Dendritic cell treated with granulocyte-macrophage colony-stimulating factor and Interleukin-4, amounts not matched to agents 40 ng/mL and 50 ng/mL, for 4 days (primary cell): ENCODE measurements at regions of chr1 and their contacts with region 1.

Region 1: DNA sequence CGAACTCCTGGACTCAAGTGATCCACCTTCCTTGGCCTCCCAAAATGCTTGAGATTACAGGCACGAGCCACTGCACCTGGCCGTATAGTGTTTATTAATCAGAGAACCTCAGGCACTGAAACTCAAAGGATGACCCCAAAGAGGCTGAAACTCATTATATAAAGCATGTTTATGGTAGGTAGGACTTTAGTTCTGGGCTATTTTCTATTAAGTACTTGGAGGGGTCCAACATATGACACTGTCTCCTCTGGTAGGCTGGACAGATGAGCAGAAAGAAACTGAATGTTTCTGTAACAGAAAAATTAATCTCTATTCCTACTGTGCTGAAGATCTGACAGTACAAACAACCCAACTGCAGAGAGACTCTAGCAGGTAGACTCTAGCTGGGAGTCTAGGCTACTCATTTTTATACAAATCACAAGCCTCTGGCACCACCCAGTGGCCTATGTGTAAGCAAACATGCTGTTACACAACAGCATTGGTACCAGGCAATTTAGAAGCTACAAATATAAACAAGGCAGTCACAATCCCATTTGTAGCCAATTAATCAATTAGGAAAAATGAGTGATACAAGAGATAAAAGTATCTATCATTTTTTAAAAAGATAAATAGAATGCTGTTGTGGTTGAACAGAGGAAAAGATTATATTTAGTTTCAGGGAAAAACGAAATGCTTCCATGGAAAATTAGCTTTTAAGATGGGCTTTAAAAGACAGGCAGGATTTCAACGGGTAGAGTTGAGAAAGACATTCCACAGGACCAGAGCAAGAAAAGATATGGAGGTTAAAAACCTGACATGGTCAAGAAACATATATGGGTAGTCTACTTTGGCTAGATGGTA is 10.4 kb downstream of the DCAF8 start:
- H3K4me3 Mint-ChIP-seq: no peak overlapping the region
- H3K27ac Mint-ChIP-seq: no peak overlapping the region
- H3K4me1 Mint-ChIP-seq: no peaks in the 10 kb centered on the region
- H3K27me3 Mint-ChIP-seq: no peaks in the 10 kb centered on the region

Region 2: DNA sequence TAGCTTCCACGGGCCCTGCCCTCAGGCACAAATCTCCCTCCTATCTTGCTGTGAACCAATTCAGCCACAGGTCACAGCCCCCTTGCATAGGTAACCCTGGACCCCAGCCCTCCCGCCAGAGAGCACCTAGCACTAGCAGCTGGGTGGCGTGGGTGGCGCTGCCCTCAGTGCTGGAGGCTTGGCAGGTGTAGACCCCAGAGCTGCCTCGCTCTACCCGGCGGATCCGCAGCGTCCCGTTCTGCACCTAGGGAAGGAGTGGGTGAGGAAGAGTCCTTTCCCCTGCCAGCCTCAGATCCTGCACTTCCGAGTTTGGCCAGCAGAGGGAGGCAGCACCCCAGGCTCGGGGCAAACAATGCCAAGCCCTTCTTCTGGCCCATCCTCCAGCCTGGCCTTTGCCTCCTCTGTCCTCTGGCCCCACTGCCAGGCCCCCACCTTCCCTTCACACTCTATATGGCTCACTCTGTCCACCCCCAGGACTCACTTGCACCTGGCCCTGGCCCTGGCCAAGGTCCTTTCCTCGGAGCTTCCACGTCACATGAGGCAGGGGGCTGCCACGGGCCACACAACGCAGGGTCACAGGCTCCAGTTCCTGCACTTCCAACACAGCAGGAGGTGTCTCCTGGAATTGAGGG is 315.5 kb before region 1 on chr1:
- intact Hi-C with region 1: loop called (anchors 5 kb)
- H3K4me3 Mint-ChIP-seq: no peak overlapping the region
- H3K27ac Mint-ChIP-seq: no peak overlapping the region
- H3K4me1 Mint-ChIP-seq: peaks cover 67% of the 10 kb centered on the region
- H3K27me3 Mint-ChIP-seq: peaks cover 14% of the 10 kb centered on the region

Region 3: GRCh38 chr1:160354388-160354985 is 102.6 kb after region 1 on chr1:
- intact Hi-C with region 1: no loop called
- H3K4me3 Mint-ChIP-seq: no peak overlapping the region
- H3K27ac Mint-ChIP-seq: no peak overlapping the region
- H3K4me1 Mint-ChIP-seq: peaks cover 24% of the 10 kb centered on the region
- H3K27me3 Mint-ChIP-seq: no peaks in the 10 kb centered on the region